Endothelial cell of umbilical vein (primary cell): ENCODE measurements at regions of chr12 and their contacts with region 1.

Region 1: DNA sequence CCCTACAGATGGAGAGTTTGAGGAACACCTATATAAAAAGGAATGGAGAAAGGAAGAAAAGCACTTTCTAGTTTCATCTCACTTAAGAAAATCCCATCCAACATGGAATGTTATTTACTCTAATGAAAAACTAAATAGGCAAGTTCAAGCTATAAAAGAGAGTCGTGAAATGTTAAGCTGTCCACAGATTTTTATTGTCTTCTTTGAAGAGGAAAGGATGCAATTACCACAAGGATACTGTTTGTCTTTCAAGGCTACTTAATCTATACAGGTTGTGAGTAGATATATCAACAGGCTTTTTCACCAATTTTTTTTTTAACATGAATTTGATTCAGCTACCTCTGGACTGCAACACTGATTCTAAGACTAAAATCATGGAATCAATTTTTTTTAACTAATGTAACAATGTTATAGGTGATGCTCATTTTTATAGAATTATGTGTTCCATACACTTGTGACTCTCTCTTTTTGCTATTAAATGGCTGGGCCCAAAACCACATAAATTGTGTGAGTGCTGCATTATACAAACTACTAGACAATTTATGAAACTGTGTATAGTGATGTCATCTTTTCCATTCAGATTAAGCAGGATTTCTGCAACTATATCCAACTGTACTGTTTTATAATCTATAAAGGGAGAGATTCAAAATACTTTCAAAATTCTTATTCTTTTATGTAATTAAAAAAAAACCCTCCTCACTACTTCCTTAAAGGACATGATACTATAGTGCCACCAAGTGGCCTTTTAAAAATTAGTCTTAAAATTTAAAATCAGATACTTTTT is 26.8 kb upstream of the BMAL2 start:
- DNase-seq: peak; percentile 64
- H3K4me3 ChIP-seq: no peak overlapping the region
- H3K27ac ChIP-seq: no peak overlapping the region
- H3K4me1 ChIP-seq: peaks cover 6% of the 10 kb centered on the region
- H3K27me3 ChIP-seq: no peaks in the 10 kb centered on the region
- CTCF ChIP-seq: peak in 1 of 2 donors; percentile 12
- POLR2A ChIP-seq: no peak

Region 2: GRCh38 chr12:27014085-27014858 is 291.6 kb before region 1 on chr12 and contains the start of gene TM7SF3:
- CTCF ChIA-PET with region 1: interaction called, 268 read pairs
- POLR2A ChIA-PET with region 1: no interaction called
- dilution Hi-C with region 1: no loop called
- intact Hi-C with region 1: loop called (anchors 1 kb)
- DNase-seq: peak; percentile 83
- H3K4me3 ChIP-seq: peak within 1 kb of the TSS; percentile 48 to 89 (median 65)
- H3K27ac ChIP-seq: peak within 1 kb of the TSS; percentile 81
- H3K4me1 ChIP-seq: peaks cover 11% of the 10 kb centered on the region
- H3K27me3 ChIP-seq: no peaks in the 10 kb centered on the region
- CTCF ChIP-seq: peak; percentile 87 to 99
- POLR2A ChIP-seq: peak; percentile 55
- total RNA-seq, gene TM7SF3: 51.0 and 54.8 TPM in 2 replicates

Region 3: DNA sequence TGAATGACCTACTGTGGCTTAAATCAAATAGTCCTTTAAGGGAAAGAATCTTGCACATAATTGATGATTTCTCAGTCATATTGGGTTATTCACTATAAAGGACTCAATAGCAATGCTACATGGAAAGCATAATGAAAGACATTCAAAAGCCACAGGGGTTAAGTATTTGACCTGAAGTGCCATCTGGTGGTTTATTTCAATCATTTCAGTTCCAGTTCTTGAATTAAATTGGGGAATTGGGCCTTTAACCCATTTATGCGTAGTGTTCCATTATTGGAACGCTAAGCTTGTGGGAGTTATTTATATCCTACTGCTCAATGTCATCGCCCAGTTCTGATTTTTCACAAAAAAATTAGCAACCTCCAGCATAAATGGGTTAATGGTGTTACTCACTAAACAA is 182.2 kb before region 1 on chr12:
- CTCF ChIA-PET with region 1: interaction called, 15 read pairs
- POLR2A ChIA-PET with region 1: no interaction called
- dilution Hi-C with region 1: no loop called
- intact Hi-C with region 1: no loop called
- DNase-seq: peak; percentile 14
- H3K4me3 ChIP-seq: no peak overlapping the region
- H3K27ac ChIP-seq: no peak overlapping the region
- H3K4me1 ChIP-seq: no peaks in the 10 kb centered on the region
- H3K27me3 ChIP-seq: no peaks in the 10 kb centered on the region
- CTCF ChIP-seq: peak in 1 of 2 donors; percentile 1
- POLR2A ChIP-seq: no peak

Region 4: DNA sequence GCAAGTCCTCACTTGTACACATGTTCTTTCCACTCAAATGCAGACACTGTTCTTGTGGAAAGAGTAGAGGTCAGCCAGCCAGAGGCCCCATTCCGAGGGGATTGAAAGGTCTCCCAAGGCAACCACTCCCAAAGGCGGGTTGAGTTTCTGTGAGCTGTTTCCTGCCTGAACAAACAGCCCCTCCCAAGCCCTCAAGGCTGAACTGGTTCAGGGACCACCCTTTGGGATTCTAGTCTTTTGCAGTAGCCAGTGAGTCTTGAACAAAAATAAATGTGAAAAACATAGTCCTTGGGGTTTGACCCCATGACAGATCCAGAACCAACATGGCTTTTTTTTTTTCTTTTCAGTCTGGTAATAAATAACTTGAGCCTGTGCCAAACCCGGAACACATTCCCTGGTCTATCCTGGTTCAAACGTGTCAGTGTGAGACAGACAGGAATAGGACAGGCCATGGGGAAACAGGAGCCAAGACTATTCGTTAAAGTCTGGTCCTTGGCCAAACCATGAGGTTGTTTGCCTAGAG is 79.4 kb before region 1 on chr12:
- CTCF ChIA-PET with region 1: interaction called, 10 read pairs
- POLR2A ChIA-PET with region 1: no interaction called
- dilution Hi-C with region 1: no loop called
- intact Hi-C with region 1: no loop called
- DNase-seq: peak; percentile 18
- H3K4me3 ChIP-seq: no peak overlapping the region
- H3K27ac ChIP-seq: no peak overlapping the region
- H3K4me1 ChIP-seq: peaks cover 10% of the 10 kb centered on the region
- H3K27me3 ChIP-seq: no peaks in the 10 kb centered on the region
- CTCF ChIP-seq: no peak
- POLR2A ChIP-seq: no peak

Region 5: DNA sequence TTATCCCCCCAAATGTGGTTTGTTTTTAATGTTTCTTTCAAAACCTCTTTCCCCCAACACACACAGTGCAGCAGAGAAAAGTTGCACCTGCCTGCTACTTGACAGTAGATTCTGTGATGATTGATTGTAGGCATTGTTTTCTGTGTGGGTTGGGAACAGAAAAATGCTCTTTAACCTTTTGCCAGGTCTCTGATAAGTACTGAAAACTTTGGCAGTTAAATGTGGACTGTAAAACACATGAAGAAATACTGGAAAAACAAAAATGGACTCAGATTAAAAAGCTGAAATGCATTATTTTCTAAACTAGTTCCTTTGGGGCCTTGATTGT is 33.2 kb before region 1 on chr12:
- CTCF ChIA-PET with region 1: interaction called, 12 read pairs
- POLR2A ChIA-PET with region 1: no interaction called
- dilution Hi-C with region 1: no loop called
- intact Hi-C with region 1: no loop called
- DNase-seq: peak; percentile 87
- H3K4me3 ChIP-seq: no peak overlapping the region
- H3K27ac ChIP-seq: no peak overlapping the region
- H3K4me1 ChIP-seq: peaks cover 34% of the 10 kb centered on the region
- H3K27me3 ChIP-seq: no peaks in the 10 kb centered on the region
- CTCF ChIP-seq: no peak
- POLR2A ChIP-seq: no peak

Region 6: GRCh38 chr12:27324530-27324929 is 18.7 kb after region 1 on chr12:
- CTCF ChIA-PET with region 1: interaction called, 59 read pairs
- POLR2A ChIA-PET with region 1: no interaction called
- dilution Hi-C with region 1: no loop called
- intact Hi-C with region 1: no loop called
- DNase-seq: no peak
- H3K4me3 ChIP-seq: no peak overlapping the region
- H3K27ac ChIP-seq: no peak overlapping the region
- H3K4me1 ChIP-seq: no peaks in the 10 kb centered on the region
- H3K27me3 ChIP-seq: no peaks in the 10 kb centered on the region
- CTCF ChIP-seq: no peak
- POLR2A ChIP-seq: no peak